ENCODE measurements at regions of chr21 and their contacts with region 1.

Region 1: DNA sequence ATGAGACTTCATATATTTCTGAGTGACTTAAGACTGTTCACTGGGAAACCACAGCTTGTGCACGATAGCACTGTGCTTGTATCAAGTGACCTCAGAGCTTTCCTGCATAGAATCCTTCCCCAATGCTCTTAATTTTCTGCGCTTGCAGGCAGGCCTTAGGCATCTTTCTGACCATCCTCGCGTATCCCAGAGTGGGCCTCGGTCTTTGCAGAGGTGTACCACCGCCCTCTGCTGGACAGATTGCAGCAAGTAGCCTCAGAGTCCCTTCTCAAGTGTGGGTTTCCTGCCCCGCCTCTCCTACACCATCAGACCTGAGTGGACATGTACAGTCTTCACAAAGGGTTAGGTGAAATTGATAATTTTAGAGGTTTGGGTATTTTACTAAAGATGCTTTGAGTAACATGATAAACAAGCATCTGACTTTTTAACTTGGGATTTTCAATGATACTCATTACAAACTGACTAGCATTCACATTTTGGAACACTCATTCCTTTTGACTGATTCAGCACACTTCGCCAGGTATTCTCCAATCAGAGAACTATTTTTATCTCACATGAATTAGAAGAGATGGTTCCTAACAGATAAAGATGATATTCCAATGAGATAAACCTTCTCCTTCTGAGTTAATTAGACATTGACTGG is 246.5 kb upstream of the USP25 start:
- DNase-seq: peak; percentile 85
- H3K4me3 Mint-ChIP-seq: no peak overlapping the region
- H3K27ac Mint-ChIP-seq: no peak overlapping the region
- H3K4me1 Mint-ChIP-seq: peaks cover 20% of the 10 kb centered on the region
- H3K27me3 Mint-ChIP-seq: no peaks in the 10 kb centered on the region

Region 2: GRCh38 chr21:14864211-14865021 is 618.8 kb before region 1 on chr21:
- CTCF ChIA-PET with region 1: interaction called, 8 read pairs
- POLR2A ChIA-PET with region 1: no interaction called
- intact Hi-C with region 1: loop called (anchors 1 kb)
- DNase-seq: peak; percentile 66
- H3K4me3 Mint-ChIP-seq: no peak overlapping the region
- H3K27ac Mint-ChIP-seq: no peak overlapping the region
- H3K4me1 Mint-ChIP-seq: no peaks in the 10 kb centered on the region
- H3K27me3 Mint-ChIP-seq: peaks cover 4% of the 10 kb centered on the region

Region 3: GRCh38 chr21:14977814-14978213 is 505.4 kb before region 1 on chr21:
- CTCF ChIA-PET with region 1: no interaction called
- POLR2A ChIA-PET with region 1: no interaction called
- intact Hi-C with region 1: no loop called
- DNase-seq: no peak
- H3K4me3 Mint-ChIP-seq: no peak overlapping the region
- H3K27ac Mint-ChIP-seq: no peak overlapping the region
- H3K4me1 Mint-ChIP-seq: peaks cover 2% of the 10 kb centered on the region
- H3K27me3 Mint-ChIP-seq: no peaks in the 10 kb centered on the region

Region 4: DNA sequence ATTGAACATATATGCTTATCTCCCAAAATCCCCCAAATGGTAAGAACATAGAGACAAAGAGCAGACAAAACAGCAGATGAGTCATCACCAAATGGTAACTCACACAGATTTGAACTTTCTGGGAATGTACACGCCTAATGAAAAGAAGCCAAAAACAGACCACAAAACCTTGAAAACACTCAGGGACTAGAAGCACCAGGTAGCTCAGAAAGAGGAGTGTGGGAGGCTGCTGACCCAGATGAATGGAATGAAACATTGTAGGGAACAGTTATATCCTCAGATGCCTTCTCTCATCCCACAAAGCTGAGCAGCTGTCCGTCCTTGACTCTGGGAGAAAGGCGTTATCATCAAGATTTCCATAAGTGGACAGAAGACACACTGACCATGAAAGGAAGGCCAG is 60.5 kb before region 1 on chr21:
- CTCF ChIA-PET with region 1: interaction called, 3 read pairs
- POLR2A ChIA-PET with region 1: no interaction called
- intact Hi-C with region 1: loop called (anchors 5 kb)
- DNase-seq: peak; percentile 15
- H3K4me3 Mint-ChIP-seq: no peak overlapping the region
- H3K27ac Mint-ChIP-seq: peak overlapping the region; percentile 16
- H3K4me1 Mint-ChIP-seq: peaks cover 32% of the 10 kb centered on the region
- H3K27me3 Mint-ChIP-seq: no peaks in the 10 kb centered on the region

Region 5: GRCh38 chr21:15472108-15473040 is 10.9 kb before region 1 on chr21:
- CTCF ChIA-PET with region 1: interaction called, 12 read pairs
- POLR2A ChIA-PET with region 1: no interaction called
- intact Hi-C with region 1: no loop called
- DNase-seq: no peak
- H3K4me3 Mint-ChIP-seq: no peak overlapping the region
- H3K27ac Mint-ChIP-seq: no peak overlapping the region
- H3K4me1 Mint-ChIP-seq: no peaks in the 10 kb centered on the region
- H3K27me3 Mint-ChIP-seq: peaks cover 4% of the 10 kb centered on the region